K562 (cell line): ENCODE measurements at regions of chrX and their contacts with region 1.

Region 1: DNA sequence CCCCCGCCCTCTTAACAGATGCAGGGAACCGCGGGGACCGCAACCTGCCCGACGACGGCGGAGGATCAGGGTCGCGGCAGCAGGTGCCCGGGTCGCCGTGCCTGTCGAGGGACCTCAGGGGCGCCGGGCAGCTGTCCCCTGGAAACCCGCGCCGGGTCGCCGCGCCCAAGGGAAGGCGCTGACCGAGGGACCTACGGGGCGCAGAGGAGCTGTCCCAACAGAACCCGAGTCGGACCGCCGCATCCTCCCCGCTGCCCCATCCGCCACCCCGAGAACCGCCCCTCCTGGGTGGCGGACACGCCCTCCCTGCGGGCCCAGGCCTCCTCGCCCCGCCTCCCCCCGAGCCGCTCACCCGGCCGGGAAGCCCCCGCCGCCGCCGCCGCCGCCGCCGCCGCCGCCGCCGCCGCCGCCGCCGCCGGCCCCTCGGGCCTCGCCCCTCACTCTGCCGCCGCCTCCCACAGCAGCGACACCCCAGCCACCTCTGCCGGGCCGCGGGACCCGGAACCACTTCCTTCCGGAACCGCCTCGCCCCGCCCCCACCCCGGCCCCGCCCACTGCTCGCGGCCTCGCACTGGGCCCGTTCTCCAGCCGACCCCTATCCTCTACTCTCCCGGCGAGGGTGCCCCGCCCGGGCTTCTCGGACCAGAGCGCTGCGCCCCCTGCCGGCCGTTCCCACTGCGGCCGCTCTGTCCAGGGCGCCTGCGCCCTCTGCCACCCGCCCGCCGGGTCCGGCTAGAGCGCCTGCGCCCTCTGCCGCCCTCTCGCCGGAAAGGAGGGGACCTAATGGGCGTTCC is at the start of gene BCLAF3:
- DNase-seq: peak; percentile 91 to 94 (median 94)
- ATAC-seq: peak; percentile 99
- H3K4me3 ChIP-seq: peak within 1 kb of the TSS; percentile 59
- H3K27ac ChIP-seq: no peak within 1 kb of the TSS
- H3K4me1 ChIP-seq: peaks cover 4 to 9% of the 10 kb centered on the region in 2 experiments; a peak in 2 of 5 replicates
- H3K27me3 ChIP-seq: no peaks in the 10 kb centered on the region
- CTCF ChIP-seq: peak; percentile 73 to 96 (median 96)
- EP300 ChIP-seq: no peak
- POLR2A ChIP-seq: no peak
- RAD21 ChIP-seq: peak; percentile 64 to 78
- polyA plus RNA-seq, gene BCLAF3: 0.73 to 0.97 TPM

Region 2: GRCh38 chrX:18931972-18932371 is 1058.8 kb before region 1 on chrX:
- CTCF ChIA-PET with region 1: interaction called, 10 read pairs
- POLR2A ChIA-PET with region 1: no interaction called
- in situ Hi-C with region 1: no loop called
- intact Hi-C with region 1: no loop called
- DNase-seq: peak in 3 of 4 experiments; percentile 6 to 23 (median 19)
- ATAC-seq: peak; percentile 85
- H3K4me3 ChIP-seq: no peak overlapping the region
- H3K27ac ChIP-seq: no peak overlapping the region
- H3K4me1 ChIP-seq: no peaks in the 10 kb centered on the region
- H3K27me3 ChIP-seq: no peaks in the 10 kb centered on the region
- CTCF ChIP-seq: peak; percentile 47 to 58 (median 49)
- EP300 ChIP-seq: no peak
- POLR2A ChIP-seq: no peak
- RAD21 ChIP-seq: peak; percentile 28 to 47; a peak in 3 of 4 replicates

Region 3: GRCh38 chrX:19739683-19740082 is 251.1 kb before region 1 on chrX:
- CTCF ChIA-PET with region 1: interaction called, 3 read pairs
- POLR2A ChIA-PET with region 1: no interaction called
- in situ Hi-C with region 1: no loop called
- intact Hi-C with region 1: loop called (anchors 1 kb)
- DNase-seq: peak; percentile 58 to 65 (median 60)
- ATAC-seq: peak; percentile 93
- H3K4me3 ChIP-seq: no peak overlapping the region
- H3K27ac ChIP-seq: no peak overlapping the region
- H3K4me1 ChIP-seq: no peaks in the 10 kb centered on the region
- H3K27me3 ChIP-seq: peaks cover 0 to 5% of the 10 kb centered on the region in 2 experiments; a peak in 2 of 5 replicates
- CTCF ChIP-seq: peak; percentile 68 to 86 (median 72)
- EP300 ChIP-seq: no peak
- POLR2A ChIP-seq: no peak
- RAD21 ChIP-seq: peak; percentile 64 to 75

Region 4: GRCh38 chrX:19904778-19905367 is 85.9 kb before region 1 on chrX:
- CTCF ChIA-PET with region 1: no interaction called
- POLR2A ChIA-PET with region 1: no interaction called
- in situ Hi-C with region 1: no loop called
- intact Hi-C with region 1: loop called (anchors 2 kb)
- DNase-seq: peak; percentile 15 to 47 (median 33)
- ATAC-seq: peak; percentile 81
- H3K4me3 ChIP-seq: no peak overlapping the region
- H3K27ac ChIP-seq: no peak overlapping the region
- H3K4me1 ChIP-seq: no peaks in the 10 kb centered on the region; a peak in 1 of 5 replicates
- H3K27me3 ChIP-seq: no peaks in the 10 kb centered on the region
- CTCF ChIP-seq: peak; percentile 66 to 78 (median 68)
- EP300 ChIP-seq: no peak
- POLR2A ChIP-seq: no peak
- RAD21 ChIP-seq: peak; percentile 63 to 76